ENCODE measurements at regions of chr14 and their contacts with region 1.

Region 1: GRCh38 chr14:34059855-34060638 is 109.2 kb upstream of the EGLN3 start:
- DNase-seq: peak; percentile 76
- H3K4me3 Mint-ChIP-seq: peak overlapping the region; percentile 78
- H3K27ac Mint-ChIP-seq: peak overlapping the region; percentile 80
- H3K4me1 Mint-ChIP-seq: peaks cover 40% of the 10 kb centered on the region
- H3K27me3 Mint-ChIP-seq: peaks cover 15% of the 10 kb centered on the region

Region 2: GRCh38 chr14:34018564-34019244 is 41.3 kb before region 1 on chr14:
- CTCF ChIA-PET with region 1: interaction called, 5 read pairs
- POLR2A ChIA-PET with region 1: interaction called, 19 read pairs
- DNase-seq: no peak
- H3K4me3 Mint-ChIP-seq: peak overlapping the region; percentile 65
- H3K27ac Mint-ChIP-seq: peak overlapping the region; percentile 71
- H3K4me1 Mint-ChIP-seq: peaks cover 17% of the 10 kb centered on the region
- H3K27me3 Mint-ChIP-seq: peaks cover 8% of the 10 kb centered on the region

Region 3: DNA sequence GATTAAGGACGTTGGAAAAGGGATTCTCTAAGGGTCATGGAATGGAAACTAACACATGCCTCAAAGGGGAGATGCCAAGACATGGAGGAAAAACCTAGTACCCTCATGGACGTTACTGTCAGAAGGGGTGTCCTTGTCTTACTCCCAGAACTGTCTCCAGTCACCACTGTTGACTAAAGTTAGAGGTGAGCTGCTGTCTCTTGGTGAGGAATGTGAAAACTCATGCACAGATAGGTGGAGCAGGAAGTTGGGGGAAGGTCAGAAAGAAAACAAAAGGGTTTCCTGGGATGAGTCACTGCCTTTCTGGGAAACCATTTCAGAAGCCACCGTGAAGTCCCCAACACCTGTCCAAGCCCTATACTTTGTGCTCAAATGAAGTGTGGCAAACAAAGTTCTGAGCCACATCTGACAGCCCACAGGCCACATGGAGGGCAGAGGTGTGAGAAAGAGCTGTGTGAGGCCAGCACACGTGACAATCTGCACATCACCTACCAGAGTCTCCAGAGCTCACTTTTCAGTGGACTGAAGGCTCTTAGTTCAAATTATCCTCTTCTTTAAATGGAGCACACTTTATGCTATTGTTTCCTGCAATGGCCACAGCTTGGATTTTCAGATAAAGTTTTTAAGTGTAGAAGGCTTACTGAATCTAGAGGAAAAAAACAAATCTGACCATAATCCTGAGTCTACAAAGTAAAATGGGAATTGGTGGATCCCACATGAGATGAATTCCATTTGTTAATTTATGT is 16.2 kb before region 1 on chr14:
- CTCF ChIA-PET with region 1: interaction called, 12 read pairs
- POLR2A ChIA-PET with region 1: interaction called, 32 read pairs
- DNase-seq: peak; percentile 92
- H3K4me3 Mint-ChIP-seq: peak overlapping the region; percentile 26
- H3K27ac Mint-ChIP-seq: peak overlapping the region; percentile 84
- H3K4me1 Mint-ChIP-seq: peaks cover 61% of the 10 kb centered on the region
- H3K27me3 Mint-ChIP-seq: peaks cover under 1% of the 10 kb centered on the region

Region 4: GRCh38 chr14:34227834-34228649 is 168.0 kb after region 1 on chr14:
- CTCF ChIA-PET with region 1: interaction called, 10 read pairs
- POLR2A ChIA-PET with region 1: no interaction called
- DNase-seq: peak; percentile 67
- H3K4me3 Mint-ChIP-seq: peak overlapping the region; percentile 34
- H3K27ac Mint-ChIP-seq: no peak overlapping the region
- H3K4me1 Mint-ChIP-seq: peaks cover 12% of the 10 kb centered on the region
- H3K27me3 Mint-ChIP-seq: peaks cover 19% of the 10 kb centered on the region

Measured in activated CD4-positive, alpha-beta memory T cell treated with anti-CD3 and anti-CD28 coated beads, Interleukin-2, amount 10 ng/mL, durations not matched to agents 7 days and 5 days (primary cell).